Mammary epithelial cell (primary cell): ENCODE measurements at regions of chr9 and their contacts with region 1.

Region 1: GRCh38 chr9:129569502-129570449 is 51.1 kb downstream of the C9orf50 start:
- DNase-seq: no peak
- H3K4me3 ChIP-seq: no peak overlapping the region
- H3K27ac ChIP-seq: no peak overlapping the region
- H3K4me1 ChIP-seq: peaks cover 30% of the 10 kb centered on the region
- H3K27me3 ChIP-seq: no peaks in the 10 kb centered on the region
- CTCF ChIP-seq: peak; percentile 11 to 35

Region 2: GRCh38 chr9:129591916-129592315 is 22.1 kb after region 1 on chr9:
- CTCF ChIA-PET with region 1: no interaction called
- dilution Hi-C with region 1: no loop called
- in situ Hi-C with region 1: no loop called
- intact Hi-C with region 1: loop called (anchors 1 kb)
- DNase-seq: no peak
- H3K4me3 ChIP-seq: no peak overlapping the region
- H3K27ac ChIP-seq: no peak overlapping the region
- H3K4me1 ChIP-seq: peaks cover 3% of the 10 kb centered on the region
- H3K27me3 ChIP-seq: peaks cover 2% of the 10 kb centered on the region
- CTCF ChIP-seq: no peak